ENCODE measurements at regions of chr16 and their contacts with region 1.

Region 1: GRCh38 chr16:72099377-72099818 is 5.8 kb downstream of the DHX38 start:
- DNase-seq: peak; percentile 45
- H3K4me3 ChIP-seq: no peak overlapping the region
- H3K27ac ChIP-seq: no peak overlapping the region
- H3K4me1 ChIP-seq: peaks cover 17% of the 10 kb centered on the region
- H3K27me3 ChIP-seq: no peaks in the 10 kb centered on the region
- CTCF ChIP-seq: peak; percentile 52 to 56

Region 2: DNA sequence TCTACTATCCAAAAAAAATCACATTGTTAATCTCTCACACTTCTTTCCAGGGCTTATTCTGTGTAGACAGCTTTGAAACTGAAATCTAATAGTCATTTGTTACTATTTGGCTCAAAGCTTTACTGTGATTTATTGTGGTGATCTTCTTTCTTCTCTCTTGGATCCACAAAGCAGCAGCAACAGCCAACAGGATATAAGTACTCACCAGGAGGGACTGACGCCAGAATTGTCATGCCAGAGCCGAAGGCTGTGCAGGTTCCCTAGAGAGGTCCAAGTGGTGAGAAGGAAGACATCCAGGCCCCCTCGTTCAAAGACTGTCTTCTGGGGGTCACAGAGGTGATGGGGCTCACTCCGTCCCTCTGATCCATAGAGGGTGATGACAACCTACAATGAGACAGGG is 132.5 kb before region 1 on chr16:
- CTCF ChIA-PET with region 1: no interaction called
- dilution Hi-C with region 1: no loop called
- in situ Hi-C with region 1: no loop called
- intact Hi-C with region 1: no loop called
- DNase-seq: no peak
- H3K4me3 ChIP-seq: no peak overlapping the region
- H3K27ac ChIP-seq: no peak overlapping the region
- H3K4me1 ChIP-seq: no peaks in the 10 kb centered on the region
- H3K27me3 ChIP-seq: no peaks in the 10 kb centered on the region
- CTCF ChIP-seq: no peak

Region 3: DNA sequence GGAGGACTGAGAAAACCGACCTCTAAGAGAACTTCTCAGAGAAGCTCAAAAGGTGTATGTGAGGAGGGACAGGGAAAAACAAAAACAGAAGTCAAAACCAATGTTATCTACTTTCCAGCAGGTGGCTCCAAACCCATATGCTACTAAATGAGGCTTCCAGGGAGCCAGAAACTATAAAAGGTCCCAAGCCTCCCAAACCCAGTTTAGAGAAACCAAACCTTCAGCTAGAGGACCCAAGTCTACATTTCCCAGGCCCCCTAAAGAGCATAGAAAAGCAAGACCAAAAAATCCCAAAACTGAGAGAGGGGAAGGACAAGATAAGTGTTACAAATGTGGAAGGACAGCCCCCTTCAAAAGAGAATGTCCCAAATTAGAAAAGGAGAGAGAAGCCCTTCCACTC is 32.7 kb before region 1 on chr16:
- CTCF ChIA-PET with region 1: no interaction called
- dilution Hi-C with region 1: no loop called
- in situ Hi-C with region 1: no loop called
- intact Hi-C with region 1: loop called (anchors 1 kb)
- DNase-seq: peak; percentile 15
- H3K4me3 ChIP-seq: no peak overlapping the region
- H3K27ac ChIP-seq: no peak overlapping the region
- H3K4me1 ChIP-seq: no peaks in the 10 kb centered on the region
- H3K27me3 ChIP-seq: no peaks in the 10 kb centered on the region
- CTCF ChIP-seq: peak; percentile 36 to 67